ENCODE measurements at regions of chr17 and their contacts with region 1.

Region 1: DNA sequence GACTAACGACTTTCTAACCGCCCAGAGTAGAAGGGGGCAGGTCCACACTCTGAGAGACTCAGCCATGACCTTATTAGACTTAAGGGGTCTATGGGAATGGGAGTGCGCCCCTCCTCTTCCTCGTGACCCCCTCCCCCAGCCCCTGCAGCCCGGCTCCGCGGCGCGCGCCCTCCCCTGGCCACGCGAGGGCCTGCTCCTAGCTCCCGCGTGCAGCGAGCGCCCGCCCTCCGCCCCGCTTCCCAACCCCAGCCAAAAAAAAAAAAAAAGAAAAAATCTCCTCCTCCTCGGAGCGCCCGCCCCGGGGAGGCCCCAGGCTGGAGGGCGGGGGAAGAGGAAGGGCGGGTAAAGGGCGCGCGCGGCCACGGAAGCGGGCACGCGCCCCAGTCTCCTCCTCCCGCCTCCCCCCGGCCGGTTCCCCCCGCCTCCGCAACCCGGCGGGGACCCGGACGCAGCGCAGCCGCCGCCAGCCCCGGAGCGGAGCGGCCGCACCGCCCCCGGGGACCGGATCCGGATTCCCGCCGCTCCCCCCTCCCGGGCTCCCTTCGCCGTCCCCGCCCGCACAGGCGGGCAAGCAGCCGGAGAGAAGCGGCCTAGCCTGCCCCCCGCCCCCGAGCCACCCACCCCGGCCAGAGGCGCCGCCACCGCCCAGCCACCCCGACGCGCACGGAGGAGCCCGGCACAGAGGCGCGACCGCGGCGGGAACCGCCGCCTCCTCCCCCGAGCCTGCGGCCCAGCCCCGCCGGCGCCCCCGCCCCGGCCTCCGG is 949 bp downstream of the UBTF start:
- DNase-seq: peak; percentile 82 to 93 (median 92)
- ATAC-seq: peak; percentile 80
- H3K4me3 ChIP-seq: peak overlapping the region; percentile 68
- H3K4me3 Mint-ChIP-seq: peak overlapping the region; percentile 76 to 94 (median 86)
- H3K27ac ChIP-seq: peak overlapping the region; percentile 90
- H3K27ac Mint-ChIP-seq: peak overlapping the region; percentile 84 to 99 (median 97)
- H3K4me1 ChIP-seq: peaks cover 38 to 42% of the 10 kb centered on the region in 2 donors
- H3K4me1 Mint-ChIP-seq: peaks cover 48 to 53% (median 52%) of the 10 kb centered on the region in 7 donors
- H3K27me3 ChIP-seq: no peaks in the 10 kb centered on the region
- H3K27me3 Mint-ChIP-seq: no peaks in the 10 kb centered on the region

Region 2: GRCh38 chr17:44199553-44200477 is 18.7 kb before region 1 on chr17 and contains the start of gene ATXN7L3:
- CTCF ChIA-PET with region 1: interaction called, 8 read pairs
- POLR2A ChIA-PET with region 1: interaction called, 319 read pairs
- intact Hi-C with region 1: loop called (anchors 1 kb)
- DNase-seq: peak; percentile 90 to 99 (median 98)
- ATAC-seq: peak; percentile 91
- H3K4me3 ChIP-seq: peak within 1 kb of the TSS; percentile 68
- H3K4me3 Mint-ChIP-seq: peak within 1 kb of the TSS; percentile 90 to 97 (median 92)
- H3K27ac ChIP-seq: peak within 1 kb of the TSS; percentile 93
- H3K27ac Mint-ChIP-seq: peak within 1 kb of the TSS; percentile 91 to 97 (median 96)
- H3K4me1 ChIP-seq: peaks cover 27 to 34% of the 10 kb centered on the region in 2 donors
- H3K4me1 Mint-ChIP-seq: peaks cover 39 to 61% (median 53%) of the 10 kb centered on the region in 7 donors
- H3K27me3 ChIP-seq: no peaks in the 10 kb centered on the region
- H3K27me3 Mint-ChIP-seq: no peaks in the 10 kb centered on the region
- total RNA-seq, gene ATXN7L3: 93.5 to 130 (median 124) TPM

Region 3: DNA sequence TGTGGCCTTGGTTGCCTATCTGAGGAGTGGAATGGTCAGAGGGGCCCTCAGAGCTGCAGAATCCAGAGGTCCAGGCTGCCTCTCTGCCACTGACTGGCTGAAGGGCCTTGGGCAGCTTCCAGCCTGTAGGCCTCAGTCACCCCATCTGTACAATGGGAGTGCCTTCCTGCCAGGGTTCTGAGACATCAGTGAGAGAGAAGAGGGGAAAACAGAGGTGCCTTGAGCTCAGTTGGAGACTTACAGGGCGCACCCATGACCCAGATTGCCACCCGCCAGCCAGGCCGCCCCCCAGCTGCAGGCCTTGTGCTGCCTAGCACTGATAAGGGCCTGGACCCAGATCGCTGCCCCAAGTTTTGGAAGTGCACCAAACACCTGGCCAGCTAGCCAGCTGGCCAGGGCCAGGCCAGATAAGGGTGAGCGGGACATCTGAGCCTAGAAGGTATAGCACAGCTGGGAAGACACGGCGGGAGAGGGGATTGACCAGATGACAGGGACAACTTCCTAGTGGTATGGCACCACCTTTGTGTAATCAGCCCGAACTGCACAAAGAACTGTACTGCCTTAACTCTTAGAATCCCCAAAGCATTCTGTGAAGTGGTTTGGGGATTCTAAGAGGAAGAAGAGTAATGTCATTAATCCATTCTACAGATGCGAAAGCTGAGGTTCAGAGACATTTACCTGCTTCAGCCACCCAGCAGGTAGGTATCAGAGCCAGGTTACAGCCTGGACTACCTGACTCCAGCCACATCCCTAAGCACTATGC is 48.1 kb after region 1 on chr17:
- CTCF ChIA-PET with region 1: interaction called, 4 read pairs
- POLR2A ChIA-PET with region 1: no interaction called
- intact Hi-C with region 1: loop called in 1 of 2 experiments (anchors 5 kb)
- DNase-seq: no peak
- ATAC-seq: no peak
- H3K4me3 ChIP-seq: no peak overlapping the region
- H3K4me3 Mint-ChIP-seq: no peak overlapping the region
- H3K27ac ChIP-seq: no peak overlapping the region
- H3K27ac Mint-ChIP-seq: peak overlapping the region in 1 of 9 donors; percentile 81
- H3K4me1 ChIP-seq: no peaks in the 10 kb centered on the region
- H3K4me1 Mint-ChIP-seq: peaks cover 0 to 4% (median 0%) of the 10 kb centered on the region in 7 donors
- H3K27me3 ChIP-seq: no peaks in the 10 kb centered on the region
- H3K27me3 Mint-ChIP-seq: peaks cover 0 to 1% (median 0%) of the 10 kb centered on the region in 5 donors

Region 4: DNA sequence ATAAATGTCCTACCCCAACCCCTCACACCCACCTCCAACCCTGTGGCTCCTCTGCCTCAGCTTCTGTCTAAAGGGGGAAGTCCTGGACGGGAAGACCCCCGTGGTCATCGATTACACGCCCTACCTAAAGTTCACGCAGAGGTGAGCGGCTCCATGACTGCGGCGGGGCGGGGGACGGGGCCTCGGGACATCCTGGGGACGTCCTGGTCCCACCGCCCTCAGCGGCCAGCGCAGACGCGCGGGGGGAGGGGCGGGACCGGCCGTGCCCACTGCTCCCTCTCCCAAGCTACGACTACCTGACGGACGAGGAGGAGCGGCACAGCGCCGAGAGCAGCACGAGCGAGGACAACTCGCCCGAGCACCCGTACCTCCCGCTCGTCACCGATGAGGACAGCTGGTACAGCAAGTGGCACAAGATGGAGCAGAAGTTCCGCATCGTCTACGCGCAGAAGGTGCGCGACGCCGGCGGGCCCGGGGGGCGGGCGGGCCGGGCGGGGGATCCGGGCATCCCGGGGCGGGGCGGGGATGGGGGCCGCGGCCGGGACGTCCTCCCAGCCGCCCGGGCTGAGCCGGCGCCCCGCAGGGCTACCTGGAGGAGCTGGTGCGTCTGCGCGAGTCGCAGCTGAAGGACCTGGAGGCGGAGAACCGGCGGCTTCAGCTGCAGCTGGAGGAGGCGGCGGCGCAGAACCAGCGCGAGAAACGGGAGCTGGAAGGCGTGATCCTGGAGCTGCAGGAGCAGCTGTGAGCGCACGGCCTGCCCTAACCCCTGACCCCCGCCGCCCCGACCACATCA is 96.5 kb after region 1 on chr17:
- CTCF ChIA-PET with region 1: no interaction called
- POLR2A ChIA-PET with region 1: interaction called, 23 read pairs
- intact Hi-C with region 1: no loop called
- DNase-seq: peak in 5 of 9 donors; percentile 21 to 58 (median 33)
- ATAC-seq: peak; percentile 60
- H3K4me3 ChIP-seq: peak overlapping the region; percentile 47
- H3K4me3 Mint-ChIP-seq: peak overlapping the region; percentile 15 to 87 (median 79)
- H3K27ac ChIP-seq: no peak overlapping the region
- H3K27ac Mint-ChIP-seq: peak overlapping the region in 1 of 9 donors; percentile 16
- H3K4me1 ChIP-seq: peaks cover 0 to 17% of the 10 kb centered on the region in 2 donors
- H3K4me1 Mint-ChIP-seq: peaks cover 11 to 24% (median 18%) of the 10 kb centered on the region in 7 donors
- H3K27me3 ChIP-seq: peaks cover 0 to 21% of the 10 kb centered on the region in 2 donors
- H3K27me3 Mint-ChIP-seq: peaks cover 25 to 48% (median 38%) of the 10 kb centered on the region in 5 donors

Region 5: GRCh38 chr17:44503147-44504029 is 284.9 kb after region 1 on chr17 and contains the start of gene GPATCH8:
- CTCF ChIA-PET with region 1: no interaction called
- POLR2A ChIA-PET with region 1: interaction called, 3 read pairs
- intact Hi-C with region 1: loop called in 1 of 2 experiments (anchors 2 kb)
- DNase-seq: peak; percentile 87 to 97 (median 94)
- ATAC-seq: peak; percentile 94
- H3K4me3 ChIP-seq: peak within 1 kb of the TSS; percentile 84
- H3K4me3 Mint-ChIP-seq: peak within 1 kb of the TSS; percentile 92 to 99 (median 98)
- H3K27ac ChIP-seq: peak within 1 kb of the TSS; percentile 93
- H3K27ac Mint-ChIP-seq: peak within 1 kb of the TSS; percentile 95 to 99 (median 97)
- H3K4me1 ChIP-seq: peaks cover 18 to 25% of the 10 kb centered on the region in 2 donors
- H3K4me1 Mint-ChIP-seq: peaks cover 24 to 50% (median 39%) of the 10 kb centered on the region in 7 donors
- H3K27me3 ChIP-seq: no peaks in the 10 kb centered on the region
- H3K27me3 Mint-ChIP-seq: peaks cover 0 to 5% (median 4%) of the 10 kb centered on the region in 5 donors
- total RNA-seq, gene GPATCH8: 45.0 to 88.5 (median 82.9) TPM